Dendritic cell treated with granulocyte-macrophage colony-stimulating factor and Interleukin-4, amounts not matched to agents 40 ng/mL and 50 ng/mL, for 4 days (primary cell): ENCODE measurements at regions of chr4 and their contacts with region 1.

Region 1: DNA sequence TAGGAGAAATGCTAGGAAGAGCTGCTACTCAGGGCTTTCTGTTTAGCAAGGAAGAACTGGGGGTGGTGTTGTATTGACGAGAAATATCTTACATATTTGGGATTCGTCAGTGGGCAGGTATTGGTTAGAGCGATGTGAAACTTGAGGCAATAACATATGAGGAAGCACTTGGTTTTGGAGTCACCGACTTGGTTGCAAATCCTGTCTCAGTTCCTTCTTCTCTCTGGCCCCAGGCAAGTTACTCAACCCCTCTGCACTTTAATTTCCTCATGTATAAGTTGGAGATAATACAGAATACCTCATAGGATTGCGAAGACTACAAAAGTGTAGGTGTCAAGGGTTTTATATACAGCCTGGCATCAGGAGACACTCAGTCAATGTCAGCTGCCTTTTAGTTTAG is 34.1 kb downstream of the GPAT3 start:
- H3K4me3 Mint-ChIP-seq: peak overlapping the region; percentile 64
- H3K27ac Mint-ChIP-seq: peak overlapping the region; percentile 88
- H3K4me1 Mint-ChIP-seq: peaks cover 36% of the 10 kb centered on the region
- H3K27me3 Mint-ChIP-seq: no peaks in the 10 kb centered on the region

Region 2: GRCh38 chr4:83535520-83536361 is 34.2 kb before region 1 on chr4 and contains the start of gene GPAT3:
- intact Hi-C with region 1: loop called (anchors 1 kb)
- H3K4me3 Mint-ChIP-seq: peak within 1 kb of the TSS; percentile 94
- H3K27ac Mint-ChIP-seq: peak within 1 kb of the TSS; percentile 85
- H3K4me1 Mint-ChIP-seq: peaks cover 28% of the 10 kb centered on the region
- H3K27me3 Mint-ChIP-seq: peaks cover 24% of the 10 kb centered on the region

Region 3: GRCh38 chr4:83629945-83630721 is 60.1 kb after region 1 on chr4:
- intact Hi-C with region 1: loop called (anchors 5 kb)
- H3K4me3 Mint-ChIP-seq: peak overlapping the region; percentile 50
- H3K27ac Mint-ChIP-seq: peak overlapping the region; percentile 50
- H3K4me1 Mint-ChIP-seq: peaks cover 20% of the 10 kb centered on the region
- H3K27me3 Mint-ChIP-seq: peaks cover 19% of the 10 kb centered on the region

Region 4: GRCh38 chr4:83644677-83645659 is 75.0 kb after region 1 on chr4:
- intact Hi-C with region 1: no loop called
- H3K4me3 Mint-ChIP-seq: no peak overlapping the region
- H3K27ac Mint-ChIP-seq: no peak overlapping the region
- H3K4me1 Mint-ChIP-seq: peaks cover 6% of the 10 kb centered on the region
- H3K27me3 Mint-ChIP-seq: peaks cover 24% of the 10 kb centered on the region

Region 5: GRCh38 chr4:83974156-83974780 is 404.3 kb after region 1 on chr4:
- intact Hi-C with region 1: no loop called
- H3K4me3 Mint-ChIP-seq: no peak overlapping the region
- H3K27ac Mint-ChIP-seq: no peak overlapping the region
- H3K4me1 Mint-ChIP-seq: no peaks in the 10 kb centered on the region
- H3K27me3 Mint-ChIP-seq: no peaks in the 10 kb centered on the region